Mammary epithelial cell (primary cell): ENCODE measurements at regions of chr12 and their contacts with region 1.

Region 1: DNA sequence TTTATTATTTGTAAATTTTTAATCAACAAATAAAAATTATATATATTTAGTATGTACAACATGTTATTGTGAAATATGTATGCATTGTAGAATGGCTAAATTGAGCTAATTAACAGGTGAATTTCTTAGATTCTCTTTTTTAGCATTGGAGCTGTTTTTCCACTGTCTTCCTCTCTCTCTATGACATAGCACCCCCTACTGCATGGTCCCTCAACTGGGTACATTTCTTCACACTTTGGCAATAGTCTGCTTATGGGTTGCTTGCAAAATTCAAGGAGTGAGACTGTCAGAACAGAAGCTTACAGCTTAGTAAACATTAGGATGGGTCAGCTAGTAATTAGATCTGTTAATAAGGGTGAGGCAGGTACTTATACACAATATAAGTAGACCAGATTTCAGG is 658.5 kb upstream of the MGAT4C start:
- DNase-seq: peak; percentile 32
- H3K4me3 ChIP-seq: no peak overlapping the region
- H3K27ac ChIP-seq: no peak overlapping the region
- H3K4me1 ChIP-seq: no peaks in the 10 kb centered on the region
- H3K27me3 ChIP-seq: no peaks in the 10 kb centered on the region
- CTCF ChIP-seq: peak; percentile 50 to 74

Region 2: DNA sequence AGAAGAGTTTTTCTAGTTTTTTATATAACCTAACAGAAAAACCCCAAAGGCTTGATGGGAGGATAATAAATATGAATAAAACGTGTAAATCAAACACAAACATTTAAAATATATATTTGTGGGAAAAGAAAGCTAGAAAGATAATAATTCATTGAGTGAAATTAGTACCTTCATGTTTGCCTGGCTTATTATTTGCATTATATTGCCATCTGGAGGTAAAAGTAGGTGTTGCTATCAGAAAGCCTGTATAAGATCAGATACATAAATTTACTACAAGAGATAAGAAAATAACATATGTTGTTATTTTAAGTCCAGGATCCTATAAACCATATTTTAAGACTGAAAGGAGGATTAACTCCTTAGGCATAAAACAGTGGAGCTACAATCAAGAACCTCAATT is 962.9 kb before region 1 on chr12:
- CTCF ChIA-PET with region 1: no interaction called
- dilution Hi-C with region 1: no loop called
- in situ Hi-C with region 1: no loop called
- intact Hi-C with region 1: loop called (anchors 10 kb)
- DNase-seq: peak; percentile 1
- H3K4me3 ChIP-seq: no peak overlapping the region
- H3K27ac ChIP-seq: no peak overlapping the region
- H3K4me1 ChIP-seq: no peaks in the 10 kb centered on the region
- H3K27me3 ChIP-seq: no peaks in the 10 kb centered on the region
- CTCF ChIP-seq: peak; percentile 45 to 49

Region 3: GRCh38 chr12:86264451-86265342 is 650.0 kb before region 1 on chr12:
- CTCF ChIA-PET with region 1: no interaction called
- dilution Hi-C with region 1: no loop called
- in situ Hi-C with region 1: no loop called
- intact Hi-C with region 1: loop called (anchors 10 kb)
- DNase-seq: peak; percentile 58
- H3K4me3 ChIP-seq: no peak overlapping the region
- H3K27ac ChIP-seq: no peak overlapping the region
- H3K4me1 ChIP-seq: no peaks in the 10 kb centered on the region
- H3K27me3 ChIP-seq: no peaks in the 10 kb centered on the region
- CTCF ChIP-seq: no peak

Region 4: GRCh38 chr12:86729739-86730138 is 185.0 kb before region 1 on chr12:
- CTCF ChIA-PET with region 1: no interaction called
- dilution Hi-C with region 1: no loop called
- in situ Hi-C with region 1: no loop called
- intact Hi-C with region 1: loop called (anchors 5 kb)
- DNase-seq: no peak
- H3K4me3 ChIP-seq: no peak overlapping the region
- H3K27ac ChIP-seq: no peak overlapping the region
- H3K4me1 ChIP-seq: peaks cover 8% of the 10 kb centered on the region
- H3K27me3 ChIP-seq: no peaks in the 10 kb centered on the region
- CTCF ChIP-seq: no peak